B cell (primary cell): ENCODE measurements at regions of chr16 and their contacts with region 1.

Region 1: DNA sequence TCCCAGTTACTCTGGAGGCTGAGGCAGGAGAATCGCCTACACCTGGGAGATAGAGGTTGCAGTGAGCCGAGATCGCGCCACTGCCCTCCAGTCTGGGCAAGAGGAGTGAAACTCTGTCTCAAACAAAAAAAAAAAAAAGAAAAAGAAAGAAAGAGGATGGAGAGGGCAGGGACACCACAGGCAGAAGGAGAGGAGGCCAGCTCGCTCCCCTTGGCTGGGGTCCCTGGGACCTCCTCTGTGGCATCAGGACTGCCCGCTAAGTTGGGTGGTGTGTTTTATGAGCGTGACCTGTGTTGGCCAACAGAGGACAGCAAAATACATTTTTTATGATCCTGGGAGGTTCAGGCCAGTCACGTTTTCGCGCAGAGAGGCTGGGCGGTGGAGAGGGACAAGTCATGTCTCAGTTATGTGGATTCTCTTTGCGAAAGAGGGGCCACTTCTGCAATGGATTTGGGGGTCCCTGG is 229.6 kb downstream of the MRTFB start:
- DNase-seq: peak; percentile 60
- ATAC-seq: peak; percentile 55
- H3K4me3 ChIP-seq: peak overlapping the region in 3 of 5 experiments; percentile 49 to 58 (median 55)
- H3K4me3 Mint-ChIP-seq: peak overlapping the region; percentile 84
- H3K27ac ChIP-seq: no peak overlapping the region
- H3K27ac Mint-ChIP-seq: peak overlapping the region; percentile 17
- H3K4me1 ChIP-seq: peaks cover 23 to 24% of the 10 kb centered on the region in 2 donors
- H3K4me1 Mint-ChIP-seq: peaks cover 19% of the 10 kb centered on the region
- H3K27me3 ChIP-seq: peaks cover 0 to 25% (median 13%) of the 10 kb centered on the region in 4 experiments
- H3K27me3 Mint-ChIP-seq: peaks cover 11% of the 10 kb centered on the region
- CTCF ChIP-seq: no peak

Region 2: GRCh38 chr16:14354551-14355351 is 54.0 kb after region 1 on chr16:
- CTCF ChIA-PET with region 1: interaction called, 10 read pairs
- POLR2A ChIA-PET with region 1: interaction called, 4 read pairs
- intact Hi-C with region 1: loop called (anchors 5 kb)
- DNase-seq: peak; percentile 91
- ATAC-seq: peak; percentile 94
- H3K4me3 ChIP-seq: peak overlapping the region in 3 of 5 experiments; percentile 16 to 59 (median 48)
- H3K4me3 Mint-ChIP-seq: peak overlapping the region; percentile 30
- H3K27ac ChIP-seq: peak overlapping the region; percentile 39 to 61
- H3K27ac Mint-ChIP-seq: peak overlapping the region; percentile 43
- H3K4me1 ChIP-seq: peaks cover 8 to 25% of the 10 kb centered on the region in 2 donors
- H3K4me1 Mint-ChIP-seq: peaks cover 29% of the 10 kb centered on the region
- H3K27me3 ChIP-seq: no peaks in the 10 kb centered on the region
- H3K27me3 Mint-ChIP-seq: no peaks in the 10 kb centered on the region
- CTCF ChIP-seq: no peak

Region 3: DNA sequence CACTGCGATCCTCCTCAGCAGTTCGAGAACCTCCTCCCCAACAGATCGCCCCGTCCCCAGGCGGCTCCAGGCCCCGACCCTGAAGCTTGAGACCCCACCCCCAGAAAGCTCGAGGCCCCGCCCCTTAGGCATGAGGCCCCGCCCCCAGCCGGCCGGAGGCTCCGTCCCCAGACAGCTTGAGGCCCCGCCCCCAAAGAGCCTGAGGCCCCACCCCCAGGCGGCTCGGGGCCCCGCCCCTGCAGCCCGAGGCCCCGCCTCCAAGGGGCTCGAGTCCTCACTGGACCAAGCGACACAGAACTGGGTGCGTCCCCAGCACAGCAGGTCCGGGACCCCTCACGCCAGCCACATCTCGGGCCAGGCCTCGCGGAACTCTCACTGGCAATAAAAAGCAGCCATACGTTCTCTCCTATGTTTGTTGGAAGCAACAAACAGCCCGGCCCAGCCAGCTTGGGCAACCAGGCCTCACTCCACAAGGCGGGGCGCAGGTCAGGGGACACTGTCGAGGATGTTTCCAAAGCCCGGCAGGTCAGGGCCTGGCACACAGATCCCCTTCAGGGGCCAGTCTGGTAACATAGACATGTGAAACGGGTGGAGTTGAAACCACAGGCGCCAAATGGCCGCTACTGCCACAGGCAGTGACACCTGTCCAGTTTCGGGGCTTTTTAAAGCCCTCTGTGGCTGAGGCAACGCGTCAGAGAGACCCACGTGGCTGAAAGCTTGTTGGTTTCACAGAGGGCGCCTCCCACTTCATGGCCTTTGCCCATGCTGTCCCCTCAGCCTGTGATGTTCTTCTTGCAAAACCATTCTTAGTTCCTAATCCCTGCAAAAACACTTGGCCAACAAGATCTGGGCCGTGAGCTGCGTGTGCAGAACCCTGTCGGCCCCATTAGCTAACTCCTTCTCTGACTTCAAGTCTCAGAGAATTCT is 105.1 kb after region 1 on chr16:
- CTCF ChIA-PET with region 1: no interaction called
- POLR2A ChIA-PET with region 1: no interaction called
- intact Hi-C with region 1: loop called (anchors 10 kb)
- DNase-seq: peak; percentile 42
- ATAC-seq: peak; percentile 77
- H3K4me3 ChIP-seq: no peak overlapping the region
- H3K4me3 Mint-ChIP-seq: peak overlapping the region; percentile 27
- H3K27ac ChIP-seq: no peak overlapping the region
- H3K27ac Mint-ChIP-seq: peak overlapping the region; percentile 82
- H3K4me1 ChIP-seq: no peaks in the 10 kb centered on the region
- H3K4me1 Mint-ChIP-seq: peaks cover 8% of the 10 kb centered on the region
- H3K27me3 ChIP-seq: no peaks in the 10 kb centered on the region
- H3K27me3 Mint-ChIP-seq: peaks cover 7% of the 10 kb centered on the region
- CTCF ChIP-seq: no peak

Region 4: DNA sequence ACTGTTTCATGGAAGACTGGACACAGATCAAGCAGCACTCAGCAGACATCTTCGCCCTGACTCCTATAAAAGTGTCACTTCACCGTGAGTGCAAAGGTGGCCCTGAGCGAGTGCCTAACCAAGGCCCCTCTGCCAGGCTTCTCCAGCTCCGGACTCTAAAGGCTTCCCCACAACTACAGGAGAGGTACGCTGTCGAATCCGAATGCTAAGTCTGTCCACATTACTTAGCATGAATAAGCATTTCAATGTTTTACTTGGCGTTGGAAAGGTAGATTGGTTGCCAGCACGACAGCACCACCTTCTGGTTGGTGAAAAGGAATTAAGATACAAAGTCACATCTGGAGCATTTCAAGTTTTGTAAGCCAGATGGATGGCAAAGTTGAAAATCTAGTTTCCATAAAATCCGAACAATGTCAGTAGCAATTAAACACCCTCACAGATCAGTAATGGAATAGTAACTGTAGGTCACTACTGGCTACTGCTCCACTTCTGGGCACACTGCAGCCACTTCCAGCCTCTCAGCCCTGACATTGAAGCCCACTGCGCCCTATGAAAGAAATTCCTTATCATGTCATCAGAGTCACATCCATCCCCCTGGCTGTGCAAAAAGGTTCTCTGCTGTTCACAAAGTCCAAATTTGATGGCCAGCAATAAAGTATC is 228.4 kb after region 1 on chr16:
- CTCF ChIA-PET with region 1: interaction called, 10 read pairs
- POLR2A ChIA-PET with region 1: no interaction called
- intact Hi-C with region 1: no loop called
- DNase-seq: peak; percentile 66
- ATAC-seq: no peak
- H3K4me3 ChIP-seq: no peak overlapping the region
- H3K4me3 Mint-ChIP-seq: no peak overlapping the region
- H3K27ac ChIP-seq: no peak overlapping the region
- H3K27ac Mint-ChIP-seq: peak overlapping the region; percentile 12
- H3K4me1 ChIP-seq: peaks cover 0 to 2% of the 10 kb centered on the region in 2 donors
- H3K4me1 Mint-ChIP-seq: peaks cover 6% of the 10 kb centered on the region
- H3K27me3 ChIP-seq: no peaks in the 10 kb centered on the region
- H3K27me3 Mint-ChIP-seq: no peaks in the 10 kb centered on the region
- CTCF ChIP-seq: peak; percentile 81

Region 5: DNA sequence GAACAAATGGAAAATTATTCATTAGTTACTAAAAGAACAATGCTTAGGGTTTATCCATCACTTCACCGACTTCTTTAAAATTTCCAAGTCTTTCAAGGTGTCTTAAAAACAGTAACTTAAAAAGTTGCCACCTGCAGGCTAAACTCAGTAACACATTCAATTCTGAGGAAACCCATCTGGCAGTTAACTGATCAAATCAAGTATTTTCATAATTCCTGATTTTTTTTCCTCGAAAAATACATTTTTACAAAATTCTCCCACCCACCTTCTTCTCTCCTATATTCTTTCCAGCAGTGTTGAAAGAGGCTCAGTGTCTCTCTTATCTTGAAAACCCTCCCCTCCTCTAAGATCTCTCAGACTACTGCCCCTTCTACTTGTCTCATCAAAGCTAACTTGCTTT is 299.4 kb after region 1 on chr16:
- CTCF ChIA-PET with region 1: no interaction called
- POLR2A ChIA-PET with region 1: no interaction called
- intact Hi-C with region 1: loop called (anchors 2 kb)
- DNase-seq: peak; percentile 31
- ATAC-seq: no peak
- H3K4me3 ChIP-seq: no peak overlapping the region
- H3K4me3 Mint-ChIP-seq: no peak overlapping the region
- H3K27ac ChIP-seq: no peak overlapping the region
- H3K27ac Mint-ChIP-seq: no peak overlapping the region
- H3K4me1 ChIP-seq: no peaks in the 10 kb centered on the region
- H3K4me1 Mint-ChIP-seq: peaks cover 3% of the 10 kb centered on the region
- H3K27me3 ChIP-seq: no peaks in the 10 kb centered on the region
- H3K27me3 Mint-ChIP-seq: no peaks in the 10 kb centered on the region
- CTCF ChIP-seq: peak; percentile 69